GM10248 (cell line): ENCODE measurements at regions of chr20 and their contacts with region 1.

Region 1: DNA sequence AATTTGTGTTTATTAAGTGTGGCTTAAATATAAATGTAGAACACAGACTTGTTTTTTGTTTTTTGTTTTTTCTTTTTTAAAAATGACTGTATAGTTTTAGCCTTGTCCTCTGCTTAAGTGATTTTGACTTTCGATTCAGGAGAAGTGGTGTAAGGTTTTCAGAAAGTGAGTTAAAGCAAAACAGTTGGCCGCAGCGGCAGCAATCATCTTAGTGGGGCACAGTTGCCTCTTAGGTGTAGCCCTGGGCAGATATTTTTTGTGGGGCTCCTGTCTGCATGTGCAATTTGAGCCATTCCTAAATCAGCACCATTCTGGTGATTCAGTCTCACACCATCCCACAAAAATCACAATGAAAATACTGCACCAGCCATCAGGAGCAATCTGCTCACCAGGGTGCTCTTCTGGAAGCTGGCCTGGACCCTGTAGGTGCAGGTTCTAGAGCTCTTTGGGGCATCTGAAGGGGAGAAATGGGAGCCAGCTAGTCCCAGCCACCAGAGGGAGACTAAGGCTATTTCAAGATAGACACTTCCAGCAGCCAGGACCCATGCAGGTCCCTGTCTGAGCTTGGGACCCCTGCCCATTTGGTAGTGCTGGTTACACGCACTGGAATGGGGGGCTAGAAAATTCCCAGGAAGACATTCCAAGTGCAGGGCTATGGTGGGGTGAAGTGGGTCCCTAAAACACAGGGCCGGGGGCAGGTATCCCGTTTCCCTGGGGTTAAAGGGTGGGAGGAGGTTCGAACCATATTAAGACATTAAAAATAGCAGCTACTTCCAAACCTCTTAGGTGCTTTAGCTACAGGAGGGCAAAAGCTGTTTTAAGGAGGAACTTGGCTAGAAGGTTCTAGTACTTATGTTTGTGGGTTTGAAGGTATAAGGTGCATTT is 156.6 kb downstream of the NFATC2 start:
- DNase-seq: peak; percentile 59
- CTCF ChIP-seq: peak; percentile 57

Region 2: GRCh38 chr20:51372176-51372803 is 13.6 kb before region 1 on chr20:
- CTCF ChIA-PET with region 1: interaction called, 10 read pairs
- POLR2A ChIA-PET with region 1: no interaction called
- DNase-seq: peak; percentile 84
- CTCF ChIP-seq: peak; percentile 83

Region 3: DNA sequence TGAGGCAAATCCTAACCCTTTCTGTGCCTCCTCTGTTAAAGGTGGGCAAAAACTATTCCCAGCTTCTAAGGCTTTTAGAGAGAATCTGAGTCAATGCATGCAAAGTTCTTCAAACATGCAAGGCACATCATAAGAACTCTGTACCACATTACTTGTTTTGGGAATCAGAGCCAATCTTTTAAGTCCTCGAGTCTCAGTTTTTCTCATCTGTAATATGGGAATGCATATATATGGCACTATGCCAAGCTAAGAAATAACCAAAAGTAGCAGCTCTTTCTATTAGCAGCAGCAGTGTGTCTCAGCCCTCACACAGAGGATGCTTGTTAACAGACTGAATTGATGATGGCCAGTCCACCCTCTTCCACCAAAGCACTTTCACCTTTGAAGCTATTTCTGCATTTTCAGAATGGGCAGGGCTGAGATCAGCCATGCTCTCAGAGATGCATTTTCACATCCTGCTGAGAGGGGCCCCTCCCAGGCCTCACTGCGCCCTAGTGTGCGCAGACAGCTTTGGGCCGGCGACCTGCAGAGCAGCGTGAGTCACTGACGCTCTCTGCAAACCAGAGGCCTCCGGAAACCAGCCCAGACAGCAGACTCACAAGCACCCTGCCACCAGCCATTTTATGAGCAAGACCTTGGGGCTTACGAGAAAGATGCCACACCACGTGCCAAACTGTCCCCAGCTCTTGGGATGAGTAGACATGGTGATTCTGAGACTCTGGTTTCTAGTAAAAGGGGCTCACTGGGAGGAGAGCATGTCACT is 18.6 kb after region 1 on chr20:
- CTCF ChIA-PET with region 1: interaction called, 17 read pairs
- POLR2A ChIA-PET with region 1: no interaction called
- DNase-seq: peak; percentile 89
- CTCF ChIP-seq: no peak

Region 4: DNA sequence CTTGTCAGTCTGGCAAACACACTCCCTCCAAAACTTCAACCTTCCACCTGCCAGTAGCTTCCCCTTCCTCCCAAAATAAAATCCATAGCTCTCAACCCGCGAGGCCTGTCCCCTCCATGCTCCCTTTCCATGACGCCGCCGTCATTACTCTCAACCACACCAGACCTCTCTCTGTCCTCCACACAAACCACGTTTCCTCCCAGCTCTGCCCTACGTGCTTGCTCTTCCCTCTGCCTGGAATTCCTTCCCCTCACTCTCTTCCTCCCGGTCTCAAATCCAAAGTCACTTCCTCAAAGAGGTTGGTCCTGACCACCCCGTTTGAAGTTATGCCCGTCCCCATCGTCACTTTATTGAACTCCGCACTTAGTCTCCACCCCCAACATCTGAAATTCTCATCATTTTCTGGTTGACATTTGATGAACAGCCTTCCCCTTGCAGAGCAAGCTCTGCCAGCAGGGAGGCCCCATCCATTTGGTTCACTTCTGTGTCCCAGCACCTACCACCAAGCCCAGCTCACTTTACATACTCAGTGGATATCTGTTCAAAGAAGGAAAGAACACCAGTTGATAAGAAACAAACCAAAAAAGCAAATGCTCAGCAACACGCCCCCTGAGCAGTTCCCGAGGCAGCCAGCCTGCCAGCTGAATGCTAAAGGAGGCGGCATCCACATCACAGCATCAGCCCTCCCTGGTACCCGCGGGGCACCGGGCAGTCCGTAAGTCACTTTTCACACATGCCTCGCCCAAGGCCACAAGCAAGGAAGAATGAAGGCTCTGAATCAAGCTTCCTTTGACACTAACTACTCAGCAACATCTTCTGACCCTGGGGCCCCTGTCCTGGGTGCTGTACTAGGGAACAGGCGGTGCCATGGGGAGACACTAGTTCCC is 31.6 kb after region 1 on chr20:
- CTCF ChIA-PET with region 1: interaction called, 16 read pairs
- POLR2A ChIA-PET with region 1: no interaction called
- DNase-seq: no peak
- CTCF ChIP-seq: no peak

Region 5: GRCh38 chr20:51624157-51624731 is 238.4 kb after region 1 on chr20:
- CTCF ChIA-PET with region 1: interaction called, 16 read pairs
- POLR2A ChIA-PET with region 1: no interaction called
- DNase-seq: peak; percentile 83
- CTCF ChIP-seq: peak; percentile 72